ENCODE measurements at regions of chr11 and their contacts with region 1.

Region 1: GRCh38 chr11:111299101-111300026 is 1.0 kb downstream of the POU2AF3 start:
- DNase-seq: no peak
- H3K4me3 ChIP-seq: peak overlapping the region; percentile 56 to 82 (median 70)
- H3K27ac ChIP-seq: peak overlapping the region; percentile 79 to 94 (median 90)
- H3K4me1 ChIP-seq: peaks cover 27 to 66% (median 33%) of the 10 kb centered on the region in 3 donors
- H3K27me3 ChIP-seq: peaks cover 0 to 15% (median 0%) of the 10 kb centered on the region in 4 donors
- CTCF ChIP-seq: peak in 5 of 6 experiments; percentile 21 to 57 (median 34)
- POLR2A ChIP-seq: no peak

Region 2: GRCh38 chr11:111417766-111418435 is 118.5 kb after region 1 on chr11:
- intact Hi-C with region 1: loop called (anchors 5 kb)
- DNase-seq: no peak
- H3K4me3 ChIP-seq: no peak overlapping the region
- H3K27ac ChIP-seq: peak overlapping the region; percentile 48 to 81 (median 68)
- H3K4me1 ChIP-seq: peaks cover 33 to 50% (median 36%) of the 10 kb centered on the region in 3 donors
- H3K27me3 ChIP-seq: no peaks in the 10 kb centered on the region
- CTCF ChIP-seq: no peak
- POLR2A ChIP-seq: no peak

Region 3: GRCh38 chr11:111460856-111461255 is 161.5 kb after region 1 on chr11:
- intact Hi-C with region 1: no loop called
- DNase-seq: no peak
- H3K4me3 ChIP-seq: no peak overlapping the region
- H3K27ac ChIP-seq: no peak overlapping the region
- H3K4me1 ChIP-seq: no peaks in the 10 kb centered on the region
- H3K27me3 ChIP-seq: peaks cover 0 to 43% (median 0%) of the 10 kb centered on the region in 4 donors
- CTCF ChIP-seq: no peak
- POLR2A ChIP-seq: no peak

Region 4: DNA sequence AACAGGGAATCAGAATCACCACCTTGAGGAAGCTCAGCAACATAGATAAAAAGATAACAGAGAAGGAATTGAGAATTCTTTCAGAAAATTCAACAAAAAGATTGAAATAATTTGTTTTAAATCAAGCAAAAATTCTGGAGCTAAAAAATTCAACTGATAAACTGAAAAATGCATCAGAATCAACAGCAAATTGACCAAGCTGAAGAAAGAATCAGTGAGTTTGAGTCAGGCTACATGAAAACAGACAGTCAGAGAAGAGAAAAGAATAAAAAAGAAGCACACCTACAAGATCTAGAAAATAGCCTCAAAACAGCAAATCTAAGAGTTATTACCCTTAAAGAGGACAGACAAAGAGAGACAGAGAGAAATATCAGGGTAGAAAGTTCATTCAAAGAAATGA is 184.1 kb after region 1 on chr11:
- intact Hi-C with region 1: no loop called
- DNase-seq: no peak
- H3K4me3 ChIP-seq: no peak overlapping the region
- H3K27ac ChIP-seq: no peak overlapping the region
- H3K4me1 ChIP-seq: no peaks in the 10 kb centered on the region
- H3K27me3 ChIP-seq: peaks cover 0 to 4% (median 0%) of the 10 kb centered on the region in 4 donors
- CTCF ChIP-seq: no peak
- POLR2A ChIP-seq: no peak